AG04450 (cell line): ENCODE measurements at regions of chr21 and their contacts with region 1.

Region 1: DNA sequence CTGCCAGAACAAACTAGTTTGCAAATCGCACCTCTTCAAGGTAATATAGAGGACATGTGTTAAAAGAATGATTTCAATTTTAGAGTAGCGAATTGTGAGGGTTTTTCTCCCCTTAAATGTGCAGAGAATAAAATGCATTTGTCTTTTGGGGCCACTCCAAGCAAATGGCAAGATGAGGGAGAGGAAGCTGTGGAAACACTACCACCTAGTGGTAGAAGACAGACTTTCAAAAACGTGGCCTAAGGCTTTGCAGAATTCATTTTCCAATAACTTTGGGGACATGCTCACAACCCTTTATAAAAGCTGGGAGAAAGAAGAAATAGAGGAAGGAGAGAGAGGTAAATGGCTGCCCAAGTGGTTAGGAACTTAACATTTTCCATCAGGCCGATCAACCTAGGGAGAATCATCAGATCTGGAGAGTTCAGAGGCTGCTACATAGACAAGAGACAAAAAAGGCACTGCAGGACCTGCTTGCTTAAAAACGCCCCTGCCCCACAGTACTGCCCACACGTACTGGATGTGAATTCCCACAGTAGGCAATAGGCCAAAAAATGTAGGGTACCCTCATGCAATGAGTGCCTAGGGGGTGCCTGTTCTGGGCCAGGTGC is 15.7 kb upstream of the RCAN1 start:
- DNase-seq: no peak
- H3K4me3 ChIP-seq: no peak overlapping the region
- H3K27ac ChIP-seq: no peak overlapping the region
- H3K27me3 ChIP-seq: peaks cover 39% of the 10 kb centered on the region
- CTCF ChIP-seq: peak; percentile 82

Region 2: DNA sequence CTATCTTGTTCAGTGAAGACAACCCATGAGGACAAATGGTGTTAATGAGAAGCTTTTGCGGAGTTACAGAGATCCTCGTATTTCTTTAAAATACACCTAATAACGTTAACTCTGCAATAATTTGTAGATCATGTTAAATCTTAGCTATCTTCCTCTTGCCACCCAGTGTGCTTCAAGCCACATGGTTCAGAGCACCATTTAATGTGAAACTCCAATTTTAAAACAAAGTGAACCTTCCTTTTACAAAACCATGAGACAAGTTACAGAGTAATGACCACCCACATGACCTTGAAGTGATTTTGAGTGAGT is 268.6 kb before region 1 on chr21:
- CTCF ChIA-PET with region 1: interaction called, 23 read pairs
- POLR2A ChIA-PET with region 1: no interaction called
- DNase-seq: no peak
- H3K4me3 ChIP-seq: no peak overlapping the region
- H3K27ac ChIP-seq: no peak overlapping the region
- H3K27me3 ChIP-seq: peaks cover 3% of the 10 kb centered on the region
- CTCF ChIP-seq: no peak

Region 3: GRCh38 chr21:34367321-34367935 is 263.2 kb before region 1 on chr21:
- CTCF ChIA-PET with region 1: interaction called, 23 read pairs
- POLR2A ChIA-PET with region 1: no interaction called
- DNase-seq: peak; percentile 55
- H3K4me3 ChIP-seq: no peak overlapping the region
- H3K27ac ChIP-seq: no peak overlapping the region
- H3K27me3 ChIP-seq: peaks cover 3% of the 10 kb centered on the region
- CTCF ChIP-seq: peak; percentile 90